ENCODE measurements at regions of chr15 and their contacts with region 1.

Region 1: DNA sequence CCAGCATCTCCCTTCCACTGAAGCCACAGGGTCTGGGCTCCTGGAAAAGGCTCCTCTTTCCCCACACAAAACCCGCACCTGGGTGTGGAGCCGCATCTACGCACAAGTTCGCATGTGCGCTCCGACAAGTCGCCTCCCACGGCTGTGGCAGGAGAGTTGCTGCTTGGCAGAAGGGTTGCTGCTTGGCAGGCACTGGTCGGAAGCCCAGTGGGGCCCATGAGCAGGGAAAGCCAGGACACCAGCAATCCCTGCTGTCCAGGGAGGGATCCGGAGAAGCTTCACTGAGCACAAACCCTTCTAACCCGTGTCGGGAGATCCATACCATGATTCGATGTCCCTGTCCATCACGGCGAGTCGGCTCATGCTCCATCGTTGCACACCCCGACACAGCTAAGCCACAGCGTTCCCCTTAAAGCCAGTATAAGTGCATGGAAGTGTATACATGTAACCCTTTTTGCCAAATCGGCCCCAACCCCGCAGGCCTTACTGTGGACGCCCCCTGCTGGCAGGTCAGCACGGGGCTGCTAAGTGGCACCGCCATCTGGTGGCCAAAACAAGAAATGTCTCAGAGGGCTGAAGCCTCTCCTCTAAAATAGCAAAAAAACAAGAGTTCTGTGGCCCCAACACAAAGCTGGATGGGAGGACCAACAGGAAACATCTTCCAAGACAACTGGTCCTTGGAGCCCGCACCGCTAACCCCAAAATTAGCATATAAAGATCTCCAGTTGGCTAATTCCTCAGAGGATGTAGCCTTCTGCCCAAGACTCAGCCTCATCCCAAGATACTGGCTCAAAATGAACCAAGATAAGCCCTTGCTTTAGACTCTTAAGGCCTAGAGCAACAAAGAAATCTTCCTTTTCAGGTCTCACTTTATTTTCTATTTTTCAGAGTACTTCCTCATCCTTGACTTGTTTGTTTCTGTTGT is 8.3 kb downstream of the ANKRD63 start:
- DNase-seq: peak; percentile 61

Region 2: GRCh38 chr15:40044717-40045571 is 229.7 kb before region 1 on chr15:
- CTCF ChIA-PET with region 1: interaction called, 10 read pairs
- POLR2A ChIA-PET with region 1: interaction called, 3 read pairs
- DNase-seq: peak; percentile 75

Region 3: GRCh38 chr15:40253167-40253790 is 21.3 kb before region 1 on chr15:
- CTCF ChIA-PET with region 1: interaction called, 11 read pairs
- POLR2A ChIA-PET with region 1: no interaction called
- DNase-seq: no peak

Region 4: DNA sequence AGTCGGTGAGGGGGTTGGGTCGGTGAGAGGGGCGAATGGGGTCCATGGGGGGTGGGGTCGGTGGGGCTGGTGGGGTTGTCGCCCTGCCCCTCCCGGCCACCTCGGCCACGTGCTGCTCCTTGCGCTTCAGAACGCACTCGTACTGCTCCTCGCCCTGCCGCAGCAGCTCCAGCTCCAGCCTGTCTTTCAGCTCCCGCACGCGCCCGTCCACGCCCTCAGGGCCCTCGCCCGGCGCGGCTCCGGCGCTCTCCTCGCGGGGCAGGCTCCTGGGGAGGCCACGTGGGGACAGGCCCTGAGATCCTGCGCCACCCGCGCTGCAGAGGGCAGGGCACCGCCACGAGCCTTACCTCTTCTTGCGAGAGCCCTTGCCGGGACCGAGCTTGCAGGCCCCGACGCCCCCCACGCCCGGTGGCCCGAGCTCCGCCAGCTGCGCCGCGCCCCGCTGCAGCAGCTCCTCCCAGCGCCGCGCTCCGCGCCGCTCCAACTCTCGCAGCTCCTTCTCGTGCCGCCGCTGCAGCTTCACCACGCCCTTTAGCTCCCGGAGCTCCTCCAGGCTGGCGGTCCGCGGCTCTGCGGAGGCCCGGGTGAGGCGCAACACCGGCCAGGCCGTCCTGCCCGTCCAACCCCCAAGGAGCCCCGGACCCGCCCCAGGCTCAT is 16.4 kb after region 1 on chr15:
- CTCF ChIA-PET with region 1: interaction called, 12 read pairs
- POLR2A ChIA-PET with region 1: no interaction called
- DNase-seq: peak; percentile 40

Region 5: DNA sequence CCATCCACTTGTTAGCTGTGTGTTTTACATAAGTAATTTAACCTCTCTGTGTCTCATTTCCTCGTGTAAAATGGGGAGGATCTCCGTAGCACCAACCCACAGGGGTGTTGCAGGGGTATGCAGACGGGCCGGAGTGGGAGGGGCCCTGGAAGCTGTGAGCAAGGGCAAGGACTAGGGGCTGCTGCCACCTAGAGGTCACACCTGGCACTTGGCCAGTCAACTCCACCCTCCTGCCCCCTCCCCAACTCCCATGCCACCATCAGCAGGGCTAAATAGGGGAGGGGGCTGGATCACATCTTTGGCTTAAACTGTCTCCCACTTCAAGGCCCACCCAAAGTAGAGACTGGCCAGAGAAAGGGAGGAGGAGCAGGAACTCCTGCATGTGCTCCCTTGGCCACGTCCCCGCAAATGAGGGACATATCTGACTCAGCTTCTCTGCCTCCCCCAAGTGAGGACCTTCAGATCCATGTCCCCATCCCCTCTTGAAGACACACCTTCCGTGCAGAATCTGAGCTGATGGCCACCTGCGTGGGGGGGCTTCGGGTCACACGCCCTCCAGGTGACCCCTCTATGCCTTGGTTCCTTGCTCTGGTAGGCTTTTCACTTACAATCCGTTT is 63.5 kb after region 1 on chr15:
- CTCF ChIA-PET with region 1: interaction called, 16 read pairs
- POLR2A ChIA-PET with region 1: no interaction called
- DNase-seq: peak; percentile 80

Measured in HEK293T (cell line).